Natural killer cell (primary cell): ENCODE measurements at regions of chr9 and their contacts with region 1.

Region 1: DNA sequence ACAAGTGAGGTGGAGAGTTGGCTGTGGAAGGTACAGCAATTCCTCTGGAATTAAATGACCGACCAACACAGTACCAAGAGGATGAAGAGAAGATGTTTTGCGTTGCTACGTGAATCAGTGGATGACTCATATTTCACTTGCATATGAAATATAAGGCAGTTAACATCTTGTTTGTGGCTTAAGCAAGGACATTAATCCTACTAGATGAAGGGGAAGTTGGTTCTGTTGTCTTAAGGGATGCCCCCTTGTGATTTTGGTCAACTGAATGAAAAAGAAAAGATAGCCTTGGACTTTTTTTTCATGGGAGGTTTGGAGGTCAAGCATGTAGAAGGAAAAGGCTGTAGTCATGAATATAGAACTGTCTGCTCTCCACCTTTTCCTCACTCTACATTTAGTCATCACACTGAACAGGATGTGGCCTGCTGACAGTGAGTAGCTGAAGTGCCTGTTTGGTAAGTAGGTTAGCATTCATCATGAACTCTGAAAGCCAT is 33.9 kb downstream of the VLDLR start:
- DNase-seq: peak; percentile 44 to 46
- ATAC-seq: peak; percentile 83 to 90 (median 88)
- H3K4me3 ChIP-seq: no peak overlapping the region
- H3K4me3 Mint-ChIP-seq: peak overlapping the region; percentile 54
- H3K27ac ChIP-seq: peak overlapping the region; percentile 86
- H3K27ac Mint-ChIP-seq: peak overlapping the region; percentile 97
- H3K4me1 ChIP-seq: peaks cover 13% of the 10 kb centered on the region
- H3K4me1 Mint-ChIP-seq: peaks cover 34 to 41% of the 10 kb centered on the region in 2 donors
- H3K27me3 ChIP-seq: no peaks in the 10 kb centered on the region
- H3K27me3 Mint-ChIP-seq: no peaks in the 10 kb centered on the region
- CTCF ChIP-seq: no peak

Region 2: DNA sequence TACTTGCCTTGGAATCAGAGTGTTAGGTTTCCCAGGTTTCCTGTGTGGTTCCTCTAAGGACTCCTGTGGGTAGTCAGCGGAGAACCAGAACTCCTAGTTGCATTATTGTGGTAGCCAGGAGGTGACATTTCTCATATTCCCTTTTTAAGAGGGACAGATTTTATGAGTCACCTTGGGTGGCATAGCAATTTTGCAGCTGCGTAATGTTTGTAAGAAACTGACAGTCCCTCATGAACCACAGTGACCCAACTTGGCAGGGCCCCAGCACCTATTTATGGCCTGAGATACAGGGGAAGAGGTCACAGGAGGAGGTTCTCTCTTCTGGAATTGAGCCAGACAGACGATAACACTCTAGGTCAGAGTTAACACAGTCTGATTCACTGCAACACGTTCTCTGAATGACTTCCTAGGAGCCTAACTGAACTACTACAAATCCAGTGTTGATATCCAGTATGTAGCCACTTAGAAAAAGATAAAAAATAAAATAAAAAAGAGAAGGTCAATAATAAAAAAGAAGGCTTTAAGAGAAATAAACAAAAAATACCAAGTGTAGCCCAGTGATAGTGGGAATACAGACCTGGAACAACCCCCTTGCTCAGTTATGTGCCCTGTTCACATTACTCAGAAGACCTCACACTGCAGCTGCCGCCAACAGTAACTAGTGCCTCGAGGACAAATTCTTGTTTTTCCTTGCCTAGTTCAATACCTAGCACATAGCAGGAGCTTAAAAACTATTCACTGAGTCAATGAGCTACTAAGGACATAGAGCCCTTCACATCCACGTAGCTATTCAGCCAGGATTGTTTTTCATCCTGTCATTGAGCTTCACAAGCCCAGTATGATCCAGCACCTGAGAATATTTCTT is 84.6 kb before region 1 on chr9:
- intact Hi-C with region 1: loop called (anchors 1 kb)
- DNase-seq: peak; percentile 36 to 48
- ATAC-seq: peak; percentile 74 to 93 (median 89)
- H3K4me3 ChIP-seq: no peak overlapping the region
- H3K4me3 Mint-ChIP-seq: no peak overlapping the region
- H3K27ac ChIP-seq: no peak overlapping the region
- H3K27ac Mint-ChIP-seq: peak overlapping the region in 1 of 2 donors; percentile 29
- H3K4me1 ChIP-seq: no peaks in the 10 kb centered on the region
- H3K4me1 Mint-ChIP-seq: peaks cover 0 to 14% of the 10 kb centered on the region in 2 donors
- H3K27me3 ChIP-seq: no peaks in the 10 kb centered on the region
- H3K27me3 Mint-ChIP-seq: peaks cover 2% of the 10 kb centered on the region in 2 donors
- CTCF ChIP-seq: no peak

Region 3: GRCh38 chr9:2621680-2622460 is 33.6 kb before region 1 on chr9 and contains the start of gene VLDLR:
- intact Hi-C with region 1: loop called (anchors 2 kb)
- DNase-seq: peak; percentile 10 to 26
- ATAC-seq: peak; percentile 45 to 62 (median 58)
- H3K4me3 ChIP-seq: peak within 1 kb of the TSS; percentile 50
- H3K4me3 Mint-ChIP-seq: peak within 1 kb of the TSS; percentile 94
- H3K27ac ChIP-seq: no peak within 1 kb of the TSS
- H3K27ac Mint-ChIP-seq: peak within 1 kb of the TSS in 1 of 2 donors; percentile 82
- H3K4me1 ChIP-seq: peaks cover 18% of the 10 kb centered on the region
- H3K4me1 Mint-ChIP-seq: peaks cover 18 to 28% of the 10 kb centered on the region in 2 donors
- H3K27me3 ChIP-seq: peaks cover 14% of the 10 kb centered on the region
- H3K27me3 Mint-ChIP-seq: peaks cover 17 to 59% of the 10 kb centered on the region in 2 donors
- CTCF ChIP-seq: no peak
- total RNA-seq, gene VLDLR: 1.4 to 2.6 (median 2.4) TPM